ENCODE measurements at regions of chr22 and their contacts with region 1.

Region 1: GRCh38 chr22:23137905-23138561 is 3.8 kb downstream of the RSPH14 start:
- DNase-seq: peak; percentile 42
- ATAC-seq: peak; percentile 60
- H3K4me3 Mint-ChIP-seq: peak overlapping the region; percentile 68
- H3K27ac Mint-ChIP-seq: peak overlapping the region; percentile 94
- H3K4me1 Mint-ChIP-seq: peaks cover 63% of the 10 kb centered on the region
- H3K27me3 Mint-ChIP-seq: no peaks in the 10 kb centered on the region
- CTCF ChIP-seq: no peak

Region 2: DNA sequence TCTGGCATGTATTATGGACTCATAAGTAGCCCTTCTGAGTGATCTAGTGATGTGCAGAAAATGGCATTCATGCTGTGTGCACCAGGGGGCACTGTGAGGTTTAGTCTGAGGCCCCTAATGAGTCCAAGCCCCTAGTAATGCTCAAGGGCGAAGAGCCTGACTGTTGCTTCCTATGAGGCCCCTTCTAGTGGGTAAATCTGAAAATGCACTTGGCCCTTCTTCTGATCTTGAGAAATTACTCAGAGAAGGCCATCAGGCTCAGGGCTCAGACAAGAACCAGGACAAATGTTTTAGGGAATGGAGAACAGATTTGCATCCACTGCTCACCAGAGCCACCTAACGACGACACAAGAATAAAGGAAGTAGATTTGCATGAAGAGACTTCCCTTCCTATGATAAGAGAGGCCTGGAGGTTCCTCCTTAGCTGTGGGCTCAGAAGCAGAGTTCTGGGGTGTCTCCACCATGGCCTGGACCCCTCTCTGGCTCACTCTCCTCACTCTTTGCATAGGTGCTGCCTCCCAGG is 417.8 kb before region 1 on chr22:
- CTCF ChIA-PET with region 1: no interaction called
- POLR2A ChIA-PET with region 1: no interaction called
- intact Hi-C with region 1: loop called (anchors 2 kb)
- DNase-seq: peak; percentile 41
- ATAC-seq: peak; percentile 68
- H3K4me3 Mint-ChIP-seq: peak overlapping the region; percentile 68
- H3K27ac Mint-ChIP-seq: peak overlapping the region; percentile 94
- H3K4me1 Mint-ChIP-seq: peaks cover 58% of the 10 kb centered on the region
- H3K27me3 Mint-ChIP-seq: no peaks in the 10 kb centered on the region
- CTCF ChIP-seq: no peak

Region 3: GRCh38 chr22:23199159-23199558 is 61.1 kb after region 1 on chr22:
- CTCF ChIA-PET with region 1: no interaction called
- POLR2A ChIA-PET with region 1: no interaction called
- intact Hi-C with region 1: no loop called
- DNase-seq: no peak
- ATAC-seq: no peak
- H3K4me3 Mint-ChIP-seq: no peak overlapping the region
- H3K27ac Mint-ChIP-seq: no peak overlapping the region
- H3K4me1 Mint-ChIP-seq: peaks cover 16% of the 10 kb centered on the region
- H3K27me3 Mint-ChIP-seq: no peaks in the 10 kb centered on the region
- CTCF ChIP-seq: no peak

Region 4: DNA sequence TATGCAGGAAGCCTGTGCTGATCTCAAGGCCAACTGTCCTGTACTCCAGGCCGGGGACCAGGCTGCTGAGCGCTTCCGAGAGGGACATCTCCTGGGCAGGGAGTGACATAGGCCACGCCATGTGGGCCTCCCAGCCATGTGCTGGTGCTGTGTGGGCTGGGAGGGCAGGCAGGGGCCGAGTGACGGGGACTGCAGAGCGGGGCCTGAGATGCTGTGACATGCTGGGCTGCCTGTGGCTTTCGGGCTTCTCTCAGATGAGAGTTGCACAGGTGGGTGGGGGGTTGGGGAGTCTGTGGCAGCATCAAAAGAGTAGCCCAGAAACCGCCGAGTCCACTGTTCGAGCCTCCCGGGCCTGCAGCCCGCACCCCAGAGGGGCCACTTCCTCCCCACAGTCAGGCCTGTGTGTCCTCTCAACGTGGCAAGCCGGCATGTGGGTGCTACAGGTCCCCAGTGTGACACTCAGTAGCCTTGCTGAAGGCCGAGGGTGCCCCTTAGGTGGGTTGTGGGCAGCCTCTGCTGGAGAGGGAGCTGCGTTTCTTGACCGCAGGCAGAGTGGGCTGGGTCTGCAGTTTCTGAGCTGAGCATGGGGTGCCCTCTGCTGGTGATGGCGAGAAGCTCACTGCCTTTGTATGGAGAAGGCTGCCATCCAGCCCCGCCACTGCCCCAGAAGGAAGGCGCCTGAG is 143.5 kb after region 1 on chr22:
- CTCF ChIA-PET with region 1: interaction called, 14 read pairs
- POLR2A ChIA-PET with region 1: interaction called, 3 read pairs
- intact Hi-C with region 1: no loop called
- DNase-seq: peak; percentile 78
- ATAC-seq: peak; percentile 85
- H3K4me3 Mint-ChIP-seq: no peak overlapping the region
- H3K27ac Mint-ChIP-seq: no peak overlapping the region
- H3K4me1 Mint-ChIP-seq: peaks cover 16% of the 10 kb centered on the region
- H3K27me3 Mint-ChIP-seq: no peaks in the 10 kb centered on the region
- CTCF ChIP-seq: no peak